Right cardiac atrium (tissue), 5 donors: ENCODE measurements at regions of chr3 and their contacts with region 1.

Region 1: DNA sequence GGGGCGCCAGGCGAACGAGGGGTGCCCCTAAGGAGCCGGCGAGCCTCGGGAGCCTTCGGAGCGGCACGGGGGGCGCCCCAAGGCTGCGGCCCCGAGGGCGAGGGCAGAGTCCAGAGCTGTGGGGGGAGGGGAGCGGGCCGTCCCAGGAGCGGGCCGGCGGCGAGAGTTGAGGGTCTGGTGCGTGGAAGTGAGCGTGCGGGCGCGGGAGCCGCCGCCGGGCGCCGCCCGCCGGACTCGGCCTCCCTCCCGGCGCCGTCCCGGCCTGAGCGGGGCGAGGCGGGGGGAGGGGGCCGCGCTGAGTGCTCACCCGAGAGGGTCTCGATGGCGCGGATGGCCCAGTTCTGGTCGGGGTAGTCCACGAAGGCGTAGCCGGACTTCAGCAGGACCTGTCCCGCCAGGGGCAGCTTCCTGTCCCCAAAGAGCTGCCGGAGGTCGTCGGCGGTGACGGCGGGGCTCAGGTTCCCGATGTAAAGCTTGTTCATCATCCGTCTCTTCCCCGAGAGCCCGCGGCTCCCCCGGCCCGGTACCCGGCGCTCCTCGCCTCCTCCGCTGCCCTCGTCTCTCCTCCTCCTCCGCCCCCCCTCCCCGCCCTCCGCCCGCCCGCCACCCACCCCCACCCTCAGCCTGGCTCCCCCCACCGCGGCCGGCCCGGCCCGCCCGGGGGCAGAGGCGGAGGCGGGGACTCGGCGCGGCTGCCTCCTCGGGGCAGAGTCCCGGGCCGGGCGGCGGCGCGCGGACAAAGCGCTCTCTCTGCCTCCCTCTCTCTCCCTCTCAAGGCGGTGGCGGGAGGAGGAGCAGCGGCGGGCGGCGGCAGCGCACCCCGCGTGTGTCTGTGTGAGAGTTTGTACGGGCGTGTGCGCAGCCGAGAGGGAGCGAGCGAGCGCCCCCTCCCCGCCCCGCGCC is at the start of gene IGF2BP2:
- DNase-seq: peak; percentile 76 to 91 (median 91)
- ATAC-seq: peak; percentile 87 to 89
- H3K4me3 ChIP-seq: peak within 1 kb of the TSS; percentile 97
- H3K27ac ChIP-seq: peak within 1 kb of the TSS; percentile 66
- H3K4me1 ChIP-seq: no peaks in the 10 kb centered on the region
- H3K27me3 ChIP-seq: no peaks in the 10 kb centered on the region
- total RNA-seq, gene IGF2BP2: 14.3 to 18.0 (median 15.7) TPM

Region 2: GRCh38 chr3:185887066-185887465 is 62.3 kb after region 1 on chr3:
- intact Hi-C with region 1: no loop called
- DNase-seq: no peak
- ATAC-seq: no peak
- H3K4me3 ChIP-seq: no peak overlapping the region
- H3K27ac ChIP-seq: no peak overlapping the region
- H3K4me1 ChIP-seq: no peaks in the 10 kb centered on the region
- H3K27me3 ChIP-seq: no peaks in the 10 kb centered on the region

Region 3: DNA sequence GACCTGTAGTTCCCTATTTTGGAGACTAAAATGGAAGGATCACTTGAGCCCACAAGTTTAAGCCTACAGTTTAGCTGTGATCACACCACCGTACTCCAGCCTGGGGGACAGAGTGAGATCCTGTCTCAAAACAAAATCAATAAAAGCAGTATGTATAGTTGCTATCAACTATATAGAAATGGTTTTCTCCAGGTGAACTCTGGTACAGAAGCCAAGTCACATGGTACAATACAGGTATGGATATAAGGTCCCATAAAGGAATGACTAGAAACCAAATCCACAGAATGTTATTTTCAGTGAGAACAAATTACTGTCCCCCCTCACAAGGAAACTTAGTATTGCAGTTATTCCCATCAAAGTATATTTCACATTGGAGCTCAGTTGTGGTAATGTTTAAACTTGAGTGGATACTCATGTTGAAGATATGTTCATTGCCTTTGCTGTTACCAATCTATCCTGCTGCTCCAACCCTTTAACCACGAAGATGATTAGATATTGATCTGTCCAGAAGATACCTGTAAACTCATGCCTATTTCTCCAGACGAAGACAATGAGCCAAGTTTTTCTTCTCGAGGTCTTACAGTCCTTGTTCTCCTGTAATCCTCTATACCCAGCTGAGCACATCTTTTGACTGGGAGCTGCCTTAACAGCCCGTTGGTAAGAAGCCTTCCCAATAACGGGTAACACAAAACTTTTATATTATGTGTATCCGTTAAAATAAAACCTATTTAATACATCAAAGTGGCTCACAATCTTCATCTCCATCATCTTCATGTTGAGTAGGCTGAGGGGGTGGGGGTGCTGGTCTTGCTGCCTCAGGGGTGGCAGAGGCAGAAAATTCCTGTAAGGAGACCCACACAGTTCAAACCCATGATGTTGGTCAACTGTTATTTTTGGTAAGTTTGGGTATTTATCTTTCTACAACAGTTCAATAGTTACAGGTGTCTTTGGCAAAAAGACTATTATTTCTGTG is 88.5 kb after region 1 on chr3:
- intact Hi-C with region 1: loop called in 1 of 4 experiments (anchors 5 kb)
- DNase-seq: no peak
- ATAC-seq: peak in 1 of 2 donors; percentile 20
- H3K4me3 ChIP-seq: no peak overlapping the region
- H3K27ac ChIP-seq: no peak overlapping the region
- H3K4me1 ChIP-seq: no peaks in the 10 kb centered on the region
- H3K27me3 ChIP-seq: no peaks in the 10 kb centered on the region

Region 4: DNA sequence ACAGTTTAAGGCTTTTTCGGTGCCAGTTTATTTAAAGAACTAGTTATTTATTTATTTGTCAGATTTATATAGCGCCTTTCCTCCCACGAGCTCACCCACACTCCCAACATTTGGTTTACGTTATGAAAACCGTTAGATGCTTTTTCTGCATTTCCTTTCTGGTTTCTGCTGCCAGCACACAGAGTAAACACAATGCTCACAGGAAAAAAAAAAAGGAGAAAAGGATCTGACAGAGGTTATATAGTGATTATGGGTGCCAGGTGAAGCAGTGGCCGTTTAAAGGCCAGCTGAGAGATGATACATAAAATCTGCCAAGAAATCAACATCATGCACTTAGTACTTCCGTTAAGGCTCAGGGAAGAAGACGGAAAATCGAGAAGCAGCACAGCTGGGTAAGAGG is 246.3 kb after region 1 on chr3:
- intact Hi-C with region 1: no loop called
- DNase-seq: no peak
- ATAC-seq: no peak
- H3K4me3 ChIP-seq: no peak overlapping the region
- H3K27ac ChIP-seq: no peak overlapping the region
- H3K4me1 ChIP-seq: no peaks in the 10 kb centered on the region
- H3K27me3 ChIP-seq: no peaks in the 10 kb centered on the region